PC-3 (cell line): ENCODE measurements at regions of chr5 and their contacts with region 1.

Region 1: GRCh38 chr5:107673368-107674136 is 2.8 kb upstream of the EFNA5 start:
- DNase-seq: peak; percentile 98
- ATAC-seq: peak; percentile 45
- H3K4me3 ChIP-seq: peak overlapping the region; percentile 83
- H3K27ac ChIP-seq: peak overlapping the region; percentile 69
- H3K4me1 ChIP-seq: peaks cover 24% of the 10 kb centered on the region
- H3K27me3 ChIP-seq: peaks cover 12% of the 10 kb centered on the region; the same call in 1 of the 2 replicates
- CTCF ChIP-seq: peak; percentile 99

Region 2: GRCh38 chr5:107104040-107104995 is 569.2 kb before region 1 on chr5:
- CTCF ChIA-PET with region 1: no interaction called
- POLR2A ChIA-PET with region 1: no interaction called
- intact Hi-C with region 1: loop called (anchors 1 kb)
- DNase-seq: peak; percentile 40
- ATAC-seq: peak; percentile 48; the same call in 1 of the 2 replicates
- H3K4me3 ChIP-seq: no peak overlapping the region
- H3K27ac ChIP-seq: no peak overlapping the region
- H3K4me1 ChIP-seq: no peaks in the 10 kb centered on the region
- H3K27me3 ChIP-seq: no peaks in the 10 kb centered on the region
- CTCF ChIP-seq: peak; percentile 55; the same call in 1 of the 2 replicates

Region 3: GRCh38 chr5:107329850-107330249 is 343.7 kb before region 1 on chr5:
- CTCF ChIA-PET with region 1: no interaction called
- POLR2A ChIA-PET with region 1: interaction called, 25 read pairs
- intact Hi-C with region 1: no loop called
- DNase-seq: no peak
- ATAC-seq: no peak
- H3K4me3 ChIP-seq: no peak overlapping the region
- H3K27ac ChIP-seq: no peak overlapping the region
- H3K4me1 ChIP-seq: peaks cover 3% of the 10 kb centered on the region; the same call in 1 of the 2 replicates
- H3K27me3 ChIP-seq: no peaks in the 10 kb centered on the region
- CTCF ChIP-seq: no peak

Region 4: DNA sequence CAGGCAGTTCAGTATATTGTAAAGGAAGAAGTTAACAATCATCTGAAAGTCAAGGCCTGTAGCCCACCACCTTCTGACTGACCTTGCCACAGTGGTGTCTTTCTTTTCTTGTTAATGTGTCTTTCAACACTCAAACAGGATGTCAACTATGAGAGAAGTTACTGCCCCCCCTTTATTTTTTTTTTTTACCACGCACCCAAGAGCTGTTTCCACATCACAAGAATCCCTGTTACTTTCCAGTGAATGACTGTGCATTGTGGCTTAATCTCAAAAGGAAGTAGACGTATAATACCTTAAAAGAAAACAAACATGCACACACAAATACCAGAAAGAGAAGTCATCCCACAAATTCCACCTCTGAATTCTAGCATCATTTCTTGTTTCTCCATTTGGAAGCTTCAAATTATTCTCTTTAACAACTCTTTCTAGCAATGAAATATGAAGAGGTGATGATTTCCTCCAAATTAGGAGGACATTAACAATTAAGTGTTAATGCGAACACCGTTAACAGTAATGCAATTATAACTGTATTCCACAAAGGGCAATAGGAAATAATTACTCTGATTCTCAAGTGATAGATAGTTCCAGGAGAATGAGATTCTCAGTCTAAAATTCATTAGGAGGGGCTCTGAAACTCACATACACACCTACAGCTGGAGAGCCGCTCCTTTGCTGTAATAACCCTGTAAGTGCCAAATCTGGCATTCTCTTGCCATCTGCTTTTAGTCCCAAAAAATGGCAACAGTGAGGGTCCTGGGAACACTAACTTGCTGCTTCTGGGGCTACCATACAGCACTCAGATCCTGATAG is 203.9 kb before region 1 on chr5:
- CTCF ChIA-PET with region 1: no interaction called
- POLR2A ChIA-PET with region 1: no interaction called
- intact Hi-C with region 1: loop called (anchors 1 kb)
- DNase-seq: peak; percentile 86
- ATAC-seq: peak; percentile 75
- H3K4me3 ChIP-seq: peak overlapping the region; percentile 20; the same call in 1 of the 2 replicates
- H3K27ac ChIP-seq: peak overlapping the region; percentile 85
- H3K4me1 ChIP-seq: peaks cover 87% of the 10 kb centered on the region
- H3K27me3 ChIP-seq: no peaks in the 10 kb centered on the region
- CTCF ChIP-seq: no peak

Region 5: DNA sequence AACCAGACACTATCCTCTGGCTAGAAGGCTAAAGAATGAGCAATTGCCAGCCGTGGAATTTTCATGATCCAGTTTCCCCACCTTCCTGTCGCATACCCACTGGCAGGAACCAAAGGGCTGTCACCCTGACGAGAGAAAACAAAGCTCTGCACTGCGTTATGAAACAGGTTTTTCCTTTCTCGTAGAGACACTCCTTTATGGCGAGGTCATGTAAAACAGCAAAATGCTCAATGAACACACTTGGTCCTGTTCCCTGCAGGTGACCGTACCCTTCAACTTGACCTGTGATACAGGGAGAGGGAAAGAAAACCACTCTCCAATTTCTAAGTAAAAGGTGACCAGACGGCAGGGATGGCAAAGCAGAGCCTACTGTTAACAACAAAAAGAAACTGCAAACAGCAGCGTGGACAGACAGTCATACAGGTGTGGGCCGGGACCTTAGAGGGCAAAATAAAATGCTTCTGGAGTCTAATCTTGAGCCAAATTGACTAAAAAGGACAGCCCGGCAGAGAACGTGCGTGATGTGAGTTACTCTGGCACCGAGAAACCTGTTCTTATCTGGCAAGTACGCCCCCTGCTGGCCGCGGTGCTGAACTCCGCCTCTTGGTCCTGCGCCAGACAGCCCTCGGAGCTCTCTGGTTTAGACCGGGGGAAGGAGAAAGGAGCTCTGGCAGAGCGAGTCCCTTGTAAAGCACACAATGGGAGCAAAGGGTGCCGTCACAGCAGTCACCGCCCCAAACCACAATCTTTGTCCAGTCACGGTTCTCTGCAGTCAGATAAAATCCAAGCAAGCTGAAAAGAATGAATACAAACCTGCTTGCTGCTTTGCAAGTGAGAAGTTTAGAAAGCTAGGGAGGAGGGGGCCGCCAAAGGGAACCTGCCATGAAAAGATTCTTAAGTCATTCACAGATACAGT is 101.7 kb before region 1 on chr5:
- CTCF ChIA-PET with region 1: interaction called, 10 read pairs
- POLR2A ChIA-PET with region 1: interaction called, 4 read pairs
- intact Hi-C with region 1: loop called (anchors 1 kb)
- DNase-seq: peak; percentile 99
- ATAC-seq: peak; percentile 98
- H3K4me3 ChIP-seq: peak overlapping the region; percentile 78
- H3K27ac ChIP-seq: peak overlapping the region; percentile 93
- H3K4me1 ChIP-seq: peaks cover 60% of the 10 kb centered on the region
- H3K27me3 ChIP-seq: no peaks in the 10 kb centered on the region
- CTCF ChIP-seq: peak; percentile 95

Region 6: GRCh38 chr5:107604832-107605389 is 68.6 kb before region 1 on chr5:
- CTCF ChIA-PET with region 1: no interaction called
- POLR2A ChIA-PET with region 1: no interaction called
- intact Hi-C with region 1: no loop called
- DNase-seq: no peak
- ATAC-seq: no peak
- H3K4me3 ChIP-seq: no peak overlapping the region
- H3K27ac ChIP-seq: no peak overlapping the region
- H3K4me1 ChIP-seq: no peaks in the 10 kb centered on the region
- H3K27me3 ChIP-seq: no peaks in the 10 kb centered on the region
- CTCF ChIP-seq: no peak

Region 7: GRCh38 chr5:108093186-108093585 is 419.6 kb after region 1 on chr5:
- CTCF ChIA-PET with region 1: no interaction called
- POLR2A ChIA-PET with region 1: no interaction called
- intact Hi-C with region 1: loop called (anchors 1 kb)
- DNase-seq: peak; percentile 55
- ATAC-seq: peak; percentile 75
- H3K4me3 ChIP-seq: no peak overlapping the region
- H3K27ac ChIP-seq: no peak overlapping the region
- H3K4me1 ChIP-seq: no peaks in the 10 kb centered on the region
- H3K27me3 ChIP-seq: no peaks in the 10 kb centered on the region
- CTCF ChIP-seq: peak; percentile 77